OCI-LY7 (cell line): ENCODE measurements at regions of chr19 and their contacts with region 1.

Region 1: DNA sequence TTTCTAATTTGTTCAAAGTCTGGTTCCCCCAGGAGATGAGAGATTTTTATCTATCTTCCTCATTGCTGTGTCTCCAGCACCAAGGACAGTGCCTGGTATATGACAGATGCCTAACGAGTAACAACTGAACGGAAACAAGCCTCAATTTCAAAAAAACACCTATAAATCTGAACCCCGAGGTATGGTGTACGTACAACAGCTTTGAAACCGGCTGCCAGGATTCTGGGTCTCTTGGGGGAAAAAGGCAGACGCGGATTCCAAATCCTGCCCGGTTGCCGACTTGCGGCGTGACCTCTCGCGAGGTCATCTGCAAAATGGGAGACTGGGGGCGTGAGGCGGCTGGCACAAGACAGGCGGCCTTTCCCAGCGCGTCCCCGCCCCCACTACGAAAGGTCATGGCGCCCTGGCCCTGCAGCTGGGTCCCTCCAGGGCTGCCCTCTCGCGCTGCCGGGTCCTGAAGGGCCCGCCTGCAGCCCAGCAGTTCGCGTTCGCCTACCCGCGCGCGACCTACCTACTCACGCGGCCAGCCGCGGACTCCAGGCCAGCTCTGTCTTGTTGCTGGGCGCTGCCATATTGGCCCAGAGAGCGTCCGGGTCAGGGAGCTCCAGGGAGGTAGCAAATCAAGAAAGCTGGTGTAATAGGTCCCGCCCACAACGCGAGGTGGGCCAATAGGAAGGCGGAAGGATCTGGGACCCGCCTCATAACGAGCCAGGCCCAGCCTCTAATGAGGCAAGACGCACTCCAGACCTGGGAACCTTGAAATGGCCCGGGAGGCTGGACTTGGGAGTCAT is at the start of gene ECSIT:
- DNase-seq: peak; percentile 97
- H3K4me3 ChIP-seq: peak within 1 kb of the TSS; percentile 80
- H3K27ac ChIP-seq: peak within 1 kb of the TSS; percentile 53
- H3K4me1 ChIP-seq: peaks cover 12% of the 10 kb centered on the region
- CTCF ChIP-seq: no peak
- total RNA-seq, gene ECSIT: 40.6 and 52.4 TPM in 2 replicates

Region 2: GRCh38 chr19:11482384-11483050 is 46.2 kb before region 1 on chr19:
- CTCF ChIA-PET with region 1: no interaction called
- POLR2A ChIA-PET with region 1: no interaction called
- intact Hi-C with region 1: loop called (anchors 1 kb)
- DNase-seq: peak; percentile 95
- H3K4me3 ChIP-seq: peak overlapping the region; percentile 65
- H3K27ac ChIP-seq: peak overlapping the region; percentile 65
- H3K4me1 ChIP-seq: peaks cover 23% of the 10 kb centered on the region
- CTCF ChIP-seq: peak; percentile 89

Region 3: DNA sequence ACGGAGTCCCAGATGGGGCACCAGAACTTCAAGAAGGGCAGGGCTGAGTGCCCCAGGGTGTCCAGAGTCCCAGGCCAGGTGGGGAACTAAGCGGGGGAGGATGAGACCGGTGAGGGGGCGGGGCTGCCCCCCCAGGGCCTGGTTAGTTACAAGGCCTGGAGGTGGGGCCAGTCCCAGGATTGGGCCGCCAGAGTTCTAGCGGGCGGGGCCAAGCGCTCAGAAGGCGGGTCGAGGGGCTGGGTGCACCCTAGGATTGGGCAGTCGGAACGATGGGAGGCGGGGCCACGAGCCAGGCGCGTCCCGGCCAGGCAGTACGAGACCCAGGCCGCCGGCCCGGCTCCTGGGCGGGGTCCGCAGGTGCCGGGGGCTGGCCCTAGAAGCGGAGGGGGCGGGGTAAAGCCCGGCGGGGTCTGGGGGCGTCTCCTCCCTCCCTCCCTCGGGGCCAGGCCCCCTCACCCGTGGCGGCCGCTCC is 23.7 kb before region 1 on chr19:
- CTCF ChIA-PET with region 1: no interaction called
- POLR2A ChIA-PET with region 1: no interaction called
- intact Hi-C with region 1: loop called (anchors 1 kb)
- DNase-seq: peak; percentile 97
- H3K4me3 ChIP-seq: peak overlapping the region; percentile 82
- H3K27ac ChIP-seq: peak overlapping the region; percentile 76
- H3K4me1 ChIP-seq: peaks cover 23% of the 10 kb centered on the region
- CTCF ChIP-seq: no peak

Region 4: DNA sequence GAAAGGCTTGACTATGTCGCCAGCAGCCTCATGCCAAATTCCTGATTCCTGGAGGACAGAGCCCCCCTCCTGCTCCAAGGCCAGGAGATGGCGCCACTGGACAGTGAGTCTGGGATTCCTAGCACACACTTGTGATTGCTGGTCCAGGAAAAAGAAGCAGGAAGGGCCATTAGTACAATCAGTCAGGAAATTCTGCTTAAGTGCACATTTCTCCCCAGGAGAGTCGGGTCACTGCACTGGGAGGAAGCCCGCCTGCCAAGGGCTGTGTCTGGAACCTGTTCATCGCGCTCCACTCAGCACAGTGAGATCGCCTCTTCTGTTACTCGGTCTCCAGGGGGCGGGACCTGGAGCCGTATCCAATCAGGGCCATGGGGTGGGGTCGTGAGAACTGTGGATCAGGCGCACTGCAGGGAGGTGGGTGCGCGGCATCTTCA is 144.9 kb after region 1 on chr19:
- CTCF ChIA-PET with region 1: no interaction called
- POLR2A ChIA-PET with region 1: no interaction called
- intact Hi-C with region 1: no loop called
- DNase-seq: peak; percentile 28
- H3K4me3 ChIP-seq: no peak overlapping the region
- H3K27ac ChIP-seq: no peak overlapping the region
- H3K4me1 ChIP-seq: no peaks in the 10 kb centered on the region
- CTCF ChIP-seq: peak; percentile 76